ENCODE measurements at regions of chr13 and their contacts with region 1.

Region 1: DNA sequence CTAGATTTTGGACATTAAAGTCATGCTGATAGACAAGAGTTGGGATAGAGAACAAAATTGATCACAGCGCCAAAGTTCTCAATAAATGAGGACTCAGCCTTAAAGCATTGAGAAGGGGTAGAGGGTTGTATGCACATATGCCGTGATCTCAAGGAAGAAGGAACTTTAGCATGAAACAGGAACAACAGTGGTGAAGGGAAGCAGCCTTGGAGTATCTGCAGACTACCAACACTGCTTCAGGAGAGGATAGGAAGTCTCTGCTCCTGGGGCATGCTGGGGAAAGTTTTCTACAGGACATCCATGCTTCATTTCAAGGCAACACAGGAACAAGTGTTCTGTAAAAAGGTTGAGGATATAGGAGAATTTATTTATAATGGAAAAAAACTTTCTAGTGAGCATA is 111.9 kb upstream of the MLNR start:
- DNase-seq: no peak
- ATAC-seq: no peak

Region 2: GRCh38 chr13:48998641-48999292 is 109.4 kb before region 1 on chr13:
- intact Hi-C with region 1: no loop called
- DNase-seq: no peak
- ATAC-seq: no peak

Region 3: DNA sequence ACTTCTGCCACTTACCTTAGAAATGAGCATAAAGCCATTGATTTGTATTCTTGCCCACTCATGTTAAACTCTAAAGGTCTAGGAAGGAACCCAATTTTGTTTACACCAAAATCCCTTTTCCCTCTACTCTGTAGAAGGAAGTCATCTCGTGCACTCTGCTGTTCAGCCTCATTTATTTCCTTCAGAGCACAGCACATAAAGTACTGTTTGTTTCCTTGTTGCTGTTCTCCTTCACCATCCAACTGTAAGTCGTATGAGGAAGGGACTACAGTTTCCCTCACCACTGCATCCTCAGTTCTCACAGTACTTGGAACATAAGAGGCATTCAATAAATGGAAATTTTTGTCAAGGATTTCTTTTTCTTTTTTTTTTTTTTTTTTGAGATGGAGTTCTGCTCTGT is 164.1 kb after region 1 on chr13:
- intact Hi-C with region 1: loop called in 1 of 2 experiments (anchors 10 kb)
- DNase-seq: no peak
- ATAC-seq: no peak